ENCODE measurements at regions of chr3 and their contacts with region 1.

Region 1: GRCh38 chr3:12993517-12994356 is 79.5 kb downstream of the IQSEC1 start:
- DNase-seq: no peak
- H3K27ac ChIP-seq: no peak overlapping the region
- CTCF ChIP-seq: no peak

Region 2: DNA sequence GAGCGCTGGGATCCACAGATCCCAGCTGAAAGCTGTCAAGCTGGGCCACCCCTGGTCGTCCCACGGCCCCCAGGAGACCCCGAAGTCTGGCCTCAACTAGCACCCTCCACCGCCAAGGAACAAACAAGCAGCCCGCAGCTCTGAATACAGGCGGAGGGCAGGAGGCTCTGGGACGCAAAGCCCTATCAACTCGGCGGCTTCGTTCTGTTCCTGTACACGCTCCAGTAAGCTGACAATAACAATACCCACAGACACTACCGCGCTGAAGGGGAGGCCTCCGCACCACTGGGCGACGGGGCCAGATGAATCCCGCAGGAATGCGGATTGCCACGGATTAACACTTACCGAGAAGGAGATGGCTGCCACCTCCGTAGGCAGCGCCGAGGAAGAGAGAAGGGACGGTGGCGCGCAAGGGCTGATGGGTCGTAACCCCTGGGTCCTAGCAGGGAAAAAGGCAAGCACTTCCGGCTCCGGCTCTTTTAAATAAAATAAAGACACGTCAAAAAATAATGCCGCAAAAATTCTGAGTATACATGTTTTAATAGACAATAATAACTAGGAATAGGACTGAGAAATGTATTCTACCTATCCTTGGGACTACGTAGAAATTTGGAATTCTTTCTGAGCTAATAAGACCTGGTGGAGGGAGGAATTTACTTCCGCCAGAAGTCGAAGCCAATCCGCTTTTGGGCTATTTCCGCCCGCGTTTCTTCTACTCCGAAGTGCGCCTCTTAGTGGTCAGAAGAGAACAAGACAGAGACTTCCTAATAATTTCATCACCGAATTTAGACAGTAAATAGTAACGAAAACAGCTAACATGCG is 152.4 kb before region 1 on chr3 and contains the start of gene RPL32:
- CTCF ChIA-PET with region 1: no interaction called
- POLR2A ChIA-PET with region 1: no interaction called
- DNase-seq: peak; percentile 77
- H3K27ac ChIP-seq: peak within 1 kb of the TSS; percentile 86
- CTCF ChIP-seq: peak; percentile 86

Region 3: GRCh38 chr3:13005301-13005700 is 11.6 kb after region 1 on chr3:
- CTCF ChIA-PET with region 1: interaction called, 3 read pairs
- POLR2A ChIA-PET with region 1: interaction called, 12 read pairs
- DNase-seq: no peak
- H3K27ac ChIP-seq: no peak overlapping the region
- CTCF ChIP-seq: no peak

Region 4: DNA sequence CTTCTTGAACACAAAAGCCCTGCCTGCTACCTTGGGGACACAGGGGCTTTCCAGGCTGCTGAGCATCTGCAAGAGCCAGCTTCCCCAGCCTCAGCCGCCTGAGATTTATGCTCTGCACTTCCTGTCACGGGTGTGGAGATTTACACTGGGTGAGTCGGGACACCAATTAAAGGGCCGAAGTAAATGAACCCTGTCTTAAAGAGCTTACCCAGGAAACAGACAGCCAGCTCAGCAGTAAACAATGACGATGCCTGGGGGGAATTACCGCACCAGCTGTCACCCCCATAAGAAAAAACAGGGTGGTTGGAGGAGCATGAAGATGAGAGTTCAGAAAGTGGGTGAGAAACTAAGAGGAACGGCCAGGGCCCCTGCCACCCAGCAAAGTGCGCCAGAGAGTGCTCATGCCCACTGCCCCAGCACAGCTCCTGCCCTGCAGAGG is 117.0 kb after region 1 on chr3:
- CTCF ChIA-PET with region 1: no interaction called
- POLR2A ChIA-PET with region 1: no interaction called
- DNase-seq: peak; percentile 23
- H3K27ac ChIP-seq: no peak overlapping the region
- CTCF ChIP-seq: no peak

Region 5: GRCh38 chr3:13141991-13142412 is 148.3 kb after region 1 on chr3:
- CTCF ChIA-PET with region 1: no interaction called
- POLR2A ChIA-PET with region 1: no interaction called
- DNase-seq: peak; percentile 50
- H3K27ac ChIP-seq: no peak overlapping the region
- CTCF ChIP-seq: no peak

Measured in RWPE1 (cell line).